ENCODE measurements at regions of chr6 and their contacts with region 1.

Region 1: DNA sequence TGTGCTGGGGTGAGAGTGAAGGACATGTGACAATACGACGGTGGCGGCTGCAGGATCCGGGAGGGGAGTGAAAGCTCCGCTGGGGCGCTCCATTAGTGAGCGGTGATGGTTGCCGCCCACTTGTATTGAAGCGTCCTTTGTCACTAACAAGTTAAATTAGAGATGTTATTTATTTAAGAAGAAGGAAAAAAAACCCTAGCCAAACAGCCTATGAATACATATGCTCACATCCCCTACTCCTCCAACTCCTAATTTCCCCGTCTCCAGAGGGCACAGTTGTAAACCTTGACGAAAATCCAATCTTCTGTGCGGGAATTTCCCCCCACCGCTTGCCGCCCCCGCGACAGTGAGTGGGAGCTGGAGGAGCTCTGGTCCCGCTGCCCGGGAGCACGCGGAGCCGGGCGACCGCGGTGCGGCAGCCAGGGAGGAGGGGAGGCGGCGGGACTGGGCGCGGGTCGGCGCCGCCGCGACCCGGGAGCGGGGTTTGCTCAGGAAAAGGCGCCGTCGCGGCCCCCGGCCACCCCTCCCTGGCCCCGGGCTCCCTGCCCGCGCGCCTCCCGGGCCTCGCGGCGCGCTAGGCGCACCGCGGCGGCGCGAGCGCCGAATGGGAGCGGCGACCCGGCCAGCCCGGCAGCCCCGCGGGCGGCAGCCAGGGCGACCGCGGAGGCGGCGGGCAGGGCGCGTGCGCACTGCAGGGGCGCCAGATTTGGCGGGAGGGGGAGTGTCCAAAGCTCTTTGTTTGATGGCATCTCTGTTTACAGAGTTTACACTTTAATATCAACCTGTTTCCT is at the start of gene MYB:
- DNase-seq: peak; percentile 83
- H3K4me3 Mint-ChIP-seq: peak within 1 kb of the TSS; percentile 86
- H3K27ac Mint-ChIP-seq: peak within 1 kb of the TSS; percentile 93
- H3K4me1 Mint-ChIP-seq: peaks cover 36% of the 10 kb centered on the region
- H3K27me3 Mint-ChIP-seq: no peaks in the 10 kb centered on the region
- total RNA-seq, gene MYB: 27.7 to 30.3 TPM

Region 2: DNA sequence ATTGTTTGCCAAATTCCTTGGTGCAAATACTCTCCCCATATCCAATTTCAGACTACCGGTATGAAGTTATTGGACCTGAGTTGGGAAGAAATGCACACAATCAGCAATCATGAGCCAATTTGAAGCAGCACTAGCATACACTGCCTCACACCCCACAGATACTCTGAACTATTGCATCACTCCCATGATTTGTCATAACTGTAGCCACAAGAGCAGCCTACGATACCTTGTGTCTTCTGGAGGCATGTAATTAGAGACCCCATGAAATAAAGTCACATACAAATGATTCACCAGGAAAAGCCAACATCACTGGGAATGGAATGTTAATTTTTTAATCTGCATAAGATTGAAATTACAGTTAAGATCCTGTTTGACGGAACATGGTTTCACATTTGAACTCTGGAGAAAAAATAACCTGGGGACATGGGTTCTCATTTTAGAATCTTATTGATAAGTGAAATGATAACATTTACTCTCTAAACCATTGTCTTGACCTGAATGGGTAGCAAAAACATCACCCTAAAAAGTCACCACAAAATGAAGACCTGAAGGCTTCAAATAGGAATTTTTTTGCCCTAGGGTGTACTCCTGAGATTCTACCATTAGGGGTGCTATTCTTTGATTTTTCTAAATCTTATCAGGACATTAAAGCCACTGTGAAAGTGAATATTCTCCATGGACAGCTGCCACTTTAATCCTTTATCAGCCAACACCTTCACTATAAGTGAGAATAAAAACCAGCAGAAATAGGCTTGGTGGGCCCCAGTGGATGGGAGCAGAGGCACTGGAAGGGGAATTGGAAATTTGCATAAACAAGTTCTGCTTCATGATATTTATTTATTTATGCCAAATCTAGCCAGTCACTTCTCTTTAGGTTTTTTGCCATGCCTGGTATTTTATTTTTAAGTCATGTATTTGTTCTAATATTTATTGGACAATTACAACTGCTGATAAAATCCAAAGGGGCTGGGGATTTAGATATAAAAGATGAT is 91.6 kb before region 1 on chr6:
- CTCF ChIA-PET with region 1: interaction called, 29 read pairs
- POLR2A ChIA-PET with region 1: interaction called, 75 read pairs
- DNase-seq: peak; percentile 50
- H3K4me3 Mint-ChIP-seq: peak overlapping the region; percentile 69
- H3K27ac Mint-ChIP-seq: peak overlapping the region; percentile 83
- H3K4me1 Mint-ChIP-seq: peaks cover 76% of the 10 kb centered on the region
- H3K27me3 Mint-ChIP-seq: no peaks in the 10 kb centered on the region

Region 3: GRCh38 chr6:135114355-135115145 is 66.2 kb before region 1 on chr6:
- CTCF ChIA-PET with region 1: no interaction called
- POLR2A ChIA-PET with region 1: interaction called, 12 read pairs
- DNase-seq: peak; percentile 78
- H3K4me3 Mint-ChIP-seq: peak overlapping the region; percentile 46
- H3K27ac Mint-ChIP-seq: peak overlapping the region; percentile 95
- H3K4me1 Mint-ChIP-seq: peaks cover 75% of the 10 kb centered on the region
- H3K27me3 Mint-ChIP-seq: no peaks in the 10 kb centered on the region

Region 4: GRCh38 chr6:135145063-135145800 is 35.5 kb before region 1 on chr6:
- CTCF ChIA-PET with region 1: interaction called, 55 read pairs
- POLR2A ChIA-PET with region 1: interaction called, 41 read pairs
- DNase-seq: no peak
- H3K4me3 Mint-ChIP-seq: peak overlapping the region; percentile 44
- H3K27ac Mint-ChIP-seq: peak overlapping the region; percentile 36
- H3K4me1 Mint-ChIP-seq: peaks cover 64% of the 10 kb centered on the region
- H3K27me3 Mint-ChIP-seq: no peaks in the 10 kb centered on the region

Region 5: DNA sequence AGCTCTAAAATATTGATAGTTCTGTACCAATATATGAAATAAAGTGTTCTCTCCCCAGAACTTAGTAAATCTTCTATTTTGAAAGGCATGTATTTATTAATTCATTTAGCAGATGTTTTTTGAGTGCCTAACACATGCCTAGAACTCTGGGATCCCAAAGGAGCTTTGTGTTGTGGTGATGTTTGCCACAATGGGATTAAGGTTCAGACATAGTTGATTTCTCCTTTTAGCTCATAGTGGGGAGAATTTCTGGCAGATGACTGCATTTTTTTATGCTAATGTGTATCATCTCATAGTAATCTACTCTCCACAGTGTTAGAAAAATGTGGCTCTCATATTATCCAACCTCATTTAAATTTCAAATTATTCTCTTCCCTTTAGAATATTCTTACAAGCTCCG is 22.1 kb after region 1 on chr6:
- CTCF ChIA-PET with region 1: interaction called, 8 read pairs
- POLR2A ChIA-PET with region 1: interaction called, 14 read pairs
- DNase-seq: no peak
- H3K4me3 Mint-ChIP-seq: no peak overlapping the region
- H3K27ac Mint-ChIP-seq: no peak overlapping the region
- H3K4me1 Mint-ChIP-seq: peaks cover 6% of the 10 kb centered on the region
- H3K27me3 Mint-ChIP-seq: no peaks in the 10 kb centered on the region

Region 6: GRCh38 chr6:135251964-135252429 is 71.3 kb after region 1 on chr6:
- CTCF ChIA-PET with region 1: no interaction called
- POLR2A ChIA-PET with region 1: no interaction called
- DNase-seq: no peak
- H3K4me3 Mint-ChIP-seq: no peak overlapping the region
- H3K27ac Mint-ChIP-seq: no peak overlapping the region
- H3K4me1 Mint-ChIP-seq: peaks cover 2% of the 10 kb centered on the region
- H3K27me3 Mint-ChIP-seq: no peaks in the 10 kb centered on the region

Region 7: GRCh38 chr6:136095986-136096385 is 915.2 kb after region 1 on chr6:
- CTCF ChIA-PET with region 1: no interaction called
- POLR2A ChIA-PET with region 1: no interaction called
- DNase-seq: no peak
- H3K4me3 Mint-ChIP-seq: no peak overlapping the region
- H3K27ac Mint-ChIP-seq: no peak overlapping the region
- H3K4me1 Mint-ChIP-seq: no peaks in the 10 kb centered on the region
- H3K27me3 Mint-ChIP-seq: peaks cover 10% of the 10 kb centered on the region